CD4-positive, alpha-beta memory T cell (primary cell): ENCODE measurements at regions of chr17 and their contacts with region 1.

Region 1: DNA sequence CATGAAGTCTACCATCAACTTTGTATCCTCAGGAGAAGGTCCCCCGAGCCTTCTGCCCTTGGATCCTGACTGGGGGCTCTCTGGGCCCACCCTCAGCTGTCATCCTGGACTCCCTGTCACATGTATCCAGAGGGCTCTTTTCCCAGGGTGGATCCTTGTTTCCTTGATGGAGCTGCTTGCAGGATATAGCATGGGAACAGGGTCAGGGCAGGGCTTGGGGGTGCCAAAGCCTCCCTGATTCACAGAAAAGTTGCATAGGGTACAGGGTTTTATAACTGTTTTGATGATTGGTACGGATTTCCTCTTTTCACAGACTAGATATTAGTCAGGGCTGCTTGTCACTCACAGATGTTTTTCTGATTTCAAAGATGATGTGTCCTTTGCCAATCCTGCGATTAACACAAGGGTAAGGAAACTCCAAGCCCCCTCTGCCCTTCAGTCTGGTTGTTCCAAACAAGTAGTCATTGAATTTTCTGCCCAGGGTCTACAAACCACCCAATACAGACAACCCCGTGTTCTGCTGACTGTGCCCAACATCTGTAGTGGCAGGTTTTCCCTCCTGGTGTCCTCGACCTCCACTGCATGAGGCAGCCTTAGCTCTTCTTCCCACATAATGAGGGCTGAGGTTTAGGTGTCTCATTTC is 20.6 kb upstream of the SLC35G3 start:
- DNase-seq: peak in 3 of 5 donors; percentile 57 to 65 (median 58)
- H3K4me3 ChIP-seq: peak overlapping the region; percentile 38 to 51
- H3K4me3 Mint-ChIP-seq: peak overlapping the region; percentile 16 to 85 (median 79)
- H3K27ac ChIP-seq: peak overlapping the region; percentile 60
- H3K27ac Mint-ChIP-seq: peak overlapping the region; percentile 87 to 97 (median 94)
- H3K4me1 ChIP-seq: peaks cover 93% of the 10 kb centered on the region
- H3K4me1 Mint-ChIP-seq: peaks cover 70 to 91% (median 79%) of the 10 kb centered on the region in 4 donors
- H3K27me3 ChIP-seq: no peaks in the 10 kb centered on the region
- H3K27me3 Mint-ChIP-seq: no peaks in the 10 kb centered on the region

Region 2: DNA sequence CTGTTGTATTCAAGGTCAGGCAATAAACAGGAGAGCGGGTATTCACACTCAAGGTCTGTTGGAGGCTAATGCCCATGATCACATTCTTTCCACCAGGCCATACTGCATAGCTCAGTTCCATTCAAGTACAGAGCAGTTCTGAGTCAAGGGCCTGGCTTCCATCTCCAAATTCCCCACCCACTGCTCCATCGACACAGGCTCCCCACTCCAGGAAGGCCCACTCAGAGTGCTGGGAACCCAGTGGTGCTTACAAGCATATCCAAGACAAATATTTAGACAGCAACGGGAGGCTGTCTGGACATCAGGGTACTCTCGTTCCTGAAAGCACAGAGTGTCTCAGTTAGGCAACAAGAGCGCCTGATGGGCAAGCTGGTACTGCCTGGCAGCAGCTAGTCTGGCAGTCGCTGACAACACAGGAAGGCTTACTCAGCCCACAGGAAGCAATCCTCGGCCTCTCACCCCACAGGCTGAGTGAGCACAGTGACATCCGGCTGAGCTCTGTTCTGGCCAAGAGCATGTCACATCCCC is 192.2 kb before region 1 on chr17:
- CTCF ChIA-PET with region 1: no interaction called
- POLR2A ChIA-PET with region 1: interaction called, 10 read pairs
- intact Hi-C with region 1: no loop called
- DNase-seq: peak; percentile 59 to 84 (median 62)
- H3K4me3 ChIP-seq: no peak overlapping the region
- H3K4me3 Mint-ChIP-seq: peak overlapping the region; percentile 57 to 76 (median 66)
- H3K27ac ChIP-seq: peak overlapping the region; percentile 66
- H3K27ac Mint-ChIP-seq: peak overlapping the region; percentile 92 to 98 (median 96)
- H3K4me1 ChIP-seq: peaks cover 42% of the 10 kb centered on the region
- H3K4me1 Mint-ChIP-seq: peaks cover 45 to 70% (median 58%) of the 10 kb centered on the region in 4 donors
- H3K27me3 ChIP-seq: no peaks in the 10 kb centered on the region
- H3K27me3 Mint-ChIP-seq: no peaks in the 10 kb centered on the region

Region 3: GRCh38 chr17:35161281-35161761 is 53.4 kb before region 1 on chr17:
- CTCF ChIA-PET with region 1: no interaction called
- POLR2A ChIA-PET with region 1: interaction called, 36 read pairs
- intact Hi-C with region 1: loop called (anchors 1 kb)
- DNase-seq: peak; percentile 55 to 65 (median 62)
- H3K4me3 ChIP-seq: peak overlapping the region in 1 of 2 donors; percentile 12
- H3K4me3 Mint-ChIP-seq: peak overlapping the region; percentile 67 to 85 (median 74)
- H3K27ac ChIP-seq: peak overlapping the region; percentile 39
- H3K27ac Mint-ChIP-seq: peak overlapping the region; percentile 84 to 94 (median 93)
- H3K4me1 ChIP-seq: peaks cover 54% of the 10 kb centered on the region
- H3K4me1 Mint-ChIP-seq: peaks cover 38 to 77% (median 59%) of the 10 kb centered on the region in 4 donors
- H3K27me3 ChIP-seq: no peaks in the 10 kb centered on the region
- H3K27me3 Mint-ChIP-seq: no peaks in the 10 kb centered on the region

Region 4: DNA sequence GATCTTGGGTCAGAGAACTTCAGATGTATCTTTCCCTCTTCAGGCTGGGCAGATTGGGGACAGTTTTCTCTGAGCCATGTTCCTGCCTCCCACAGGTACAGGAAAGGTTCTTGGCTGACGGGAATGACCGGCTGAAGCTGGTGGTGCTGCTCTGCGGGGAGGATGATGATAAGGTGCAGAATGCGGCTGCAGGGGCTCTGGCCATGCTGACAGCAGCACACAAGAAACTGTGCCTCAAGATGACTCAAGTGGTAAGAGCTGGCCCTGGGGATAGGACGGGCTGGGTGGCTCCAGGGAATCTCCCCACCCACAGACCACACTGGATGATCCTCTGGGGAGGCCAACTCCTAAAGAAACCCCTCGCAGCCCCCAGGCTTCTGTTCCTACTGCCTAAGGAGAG is 31.4 kb before region 1 on chr17:
- CTCF ChIA-PET with region 1: interaction called, 6 read pairs
- POLR2A ChIA-PET with region 1: interaction called, 48 read pairs
- intact Hi-C with region 1: loop called (anchors 2 kb)
- DNase-seq: no peak
- H3K4me3 ChIP-seq: no peak overlapping the region
- H3K4me3 Mint-ChIP-seq: no peak overlapping the region
- H3K27ac ChIP-seq: no peak overlapping the region
- H3K27ac Mint-ChIP-seq: peak overlapping the region in 2 of 7 donors; percentile 18 to 19
- H3K4me1 ChIP-seq: peaks cover 43% of the 10 kb centered on the region
- H3K4me1 Mint-ChIP-seq: peaks cover 35 to 73% (median 44%) of the 10 kb centered on the region in 4 donors
- H3K27me3 ChIP-seq: no peaks in the 10 kb centered on the region
- H3K27me3 Mint-ChIP-seq: no peaks in the 10 kb centered on the region

Region 5: DNA sequence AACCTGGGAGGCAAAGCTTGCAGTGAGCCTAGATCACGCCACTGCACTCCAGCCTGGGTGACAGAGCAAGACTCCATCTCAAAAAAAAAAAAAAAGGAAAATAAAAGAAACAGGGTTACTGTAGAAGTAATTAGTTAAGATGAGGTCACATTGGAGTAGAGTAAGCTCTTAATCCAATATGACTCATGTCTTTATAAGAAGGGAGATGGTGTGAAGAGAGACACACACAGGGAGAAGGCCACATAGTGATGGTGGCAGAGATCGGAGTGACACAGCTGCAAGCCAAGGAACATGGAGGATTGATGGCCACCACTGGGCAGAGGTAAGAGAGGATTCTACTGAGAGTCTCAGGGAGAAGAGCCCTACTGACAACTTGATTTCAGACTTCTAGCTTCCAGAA is 12.8 kb after region 1 on chr17:
- CTCF ChIA-PET with region 1: interaction called, 3 read pairs
- POLR2A ChIA-PET with region 1: interaction called, 256 read pairs
- intact Hi-C with region 1: no loop called
- DNase-seq: no peak
- H3K4me3 ChIP-seq: no peak overlapping the region
- H3K4me3 Mint-ChIP-seq: no peak overlapping the region
- H3K27ac ChIP-seq: no peak overlapping the region
- H3K27ac Mint-ChIP-seq: peak overlapping the region in 1 of 7 donors; percentile 29
- H3K4me1 ChIP-seq: peaks cover 17% of the 10 kb centered on the region
- H3K4me1 Mint-ChIP-seq: peaks cover 31 to 52% (median 39%) of the 10 kb centered on the region in 4 donors
- H3K27me3 ChIP-seq: no peaks in the 10 kb centered on the region
- H3K27me3 Mint-ChIP-seq: no peaks in the 10 kb centered on the region

Region 6: GRCh38 chr17:35265566-35266141 is 50.9 kb after region 1 on chr17:
- CTCF ChIA-PET with region 1: no interaction called
- POLR2A ChIA-PET with region 1: interaction called, 22 read pairs
- intact Hi-C with region 1: no loop called
- DNase-seq: no peak
- H3K4me3 ChIP-seq: no peak overlapping the region
- H3K4me3 Mint-ChIP-seq: peak overlapping the region in 7 of 8 donors; percentile 0 to 71 (median 49)
- H3K27ac ChIP-seq: no peak overlapping the region
- H3K27ac Mint-ChIP-seq: peak overlapping the region in 5 of 7 donors; percentile 10 to 83 (median 65)
- H3K4me1 ChIP-seq: peaks cover 48% of the 10 kb centered on the region
- H3K4me1 Mint-ChIP-seq: peaks cover 45 to 64% (median 52%) of the 10 kb centered on the region in 4 donors
- H3K27me3 ChIP-seq: no peaks in the 10 kb centered on the region
- H3K27me3 Mint-ChIP-seq: no peaks in the 10 kb centered on the region

Region 7: DNA sequence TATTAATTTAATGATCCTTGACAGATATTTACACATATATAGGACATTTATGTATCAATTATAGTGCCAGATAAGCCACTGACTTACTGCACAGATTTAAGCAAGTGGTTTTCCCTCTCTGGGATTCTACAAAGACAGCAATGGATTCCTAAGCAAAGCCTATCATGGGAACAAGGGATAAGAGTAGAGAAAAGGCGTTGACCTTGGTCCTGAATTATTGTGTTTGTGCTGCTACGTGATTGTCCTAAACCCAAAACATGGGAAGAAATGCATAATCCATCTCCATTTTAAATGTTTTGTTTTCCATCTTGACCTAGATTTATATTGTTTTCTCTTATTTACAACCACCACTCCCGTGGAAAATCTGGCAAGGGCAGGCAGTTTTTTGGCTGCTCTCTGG is 144.6 kb after region 1 on chr17:
- CTCF ChIA-PET with region 1: no interaction called
- POLR2A ChIA-PET with region 1: no interaction called
- intact Hi-C with region 1: no loop called
- DNase-seq: no peak
- H3K4me3 ChIP-seq: no peak overlapping the region
- H3K4me3 Mint-ChIP-seq: no peak overlapping the region
- H3K27ac ChIP-seq: no peak overlapping the region
- H3K27ac Mint-ChIP-seq: peak overlapping the region in 1 of 7 donors; percentile 32
- H3K4me1 ChIP-seq: peaks cover 8% of the 10 kb centered on the region
- H3K4me1 Mint-ChIP-seq: peaks cover 15 to 39% (median 24%) of the 10 kb centered on the region in 4 donors
- H3K27me3 ChIP-seq: no peaks in the 10 kb centered on the region
- H3K27me3 Mint-ChIP-seq: no peaks in the 10 kb centered on the region

Region 8: GRCh38 chr17:35529866-35530265 is 315.1 kb after region 1 on chr17:
- CTCF ChIA-PET with region 1: interaction called, 4 read pairs
- POLR2A ChIA-PET with region 1: interaction called, 105 read pairs
- intact Hi-C with region 1: no loop called
- DNase-seq: no peak
- H3K4me3 ChIP-seq: no peak overlapping the region
- H3K4me3 Mint-ChIP-seq: peak overlapping the region in 7 of 8 donors; percentile 24 to 83 (median 65)
- H3K27ac ChIP-seq: no peak overlapping the region
- H3K27ac Mint-ChIP-seq: peak overlapping the region; percentile 26 to 93 (median 72)
- H3K4me1 ChIP-seq: peaks cover 70% of the 10 kb centered on the region
- H3K4me1 Mint-ChIP-seq: peaks cover 61 to 85% (median 73%) of the 10 kb centered on the region in 4 donors
- H3K27me3 ChIP-seq: no peaks in the 10 kb centered on the region
- H3K27me3 Mint-ChIP-seq: no peaks in the 10 kb centered on the region